Prostate gland (tissue), 2 donors: ENCODE measurements at regions of chr5 and their contacts with region 1.

Region 1: DNA sequence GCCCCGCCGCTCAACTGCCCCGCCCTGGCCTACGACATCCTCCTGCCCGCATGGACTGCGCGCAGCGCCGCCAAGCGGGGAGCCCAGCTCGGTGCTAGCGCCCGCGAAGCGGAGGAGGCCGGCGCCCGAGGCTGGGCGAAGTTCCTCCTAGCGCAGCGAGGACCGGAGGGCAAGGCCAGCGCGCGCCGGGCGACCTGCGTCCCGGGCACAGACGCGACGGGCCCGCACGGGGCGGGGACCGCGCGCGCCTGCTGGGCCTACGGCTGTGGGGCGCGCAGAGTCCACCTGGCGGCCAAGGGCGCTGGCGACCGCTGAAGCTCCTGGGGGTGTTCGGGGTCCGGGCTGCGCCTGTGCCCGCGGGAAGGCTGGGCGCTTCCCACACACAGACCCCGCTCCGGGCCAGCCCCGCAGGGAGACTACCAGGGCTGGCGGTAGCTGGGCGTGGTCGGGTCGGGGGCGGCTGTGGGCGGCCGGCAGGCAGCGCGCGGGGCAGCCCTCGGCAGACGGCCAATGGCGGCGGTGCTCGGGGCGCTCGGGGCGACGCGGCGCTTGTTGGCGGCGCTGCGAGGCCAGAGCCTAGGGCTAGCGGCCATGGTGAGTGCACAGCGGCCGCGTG is at the start of gene PCBD2:
- DNase-seq: peak; percentile 86
- H3K4me3 ChIP-seq: peak within 1 kb of the TSS; percentile 85 to 87
- H3K27ac ChIP-seq: peak within 1 kb of the TSS; percentile 93 to 95
- H3K4me1 ChIP-seq: no peaks in the 10 kb centered on the region
- H3K27me3 ChIP-seq: no peaks in the 10 kb centered on the region
- CTCF ChIP-seq: peak; percentile 67 to 97 (median 84)
- POLR2A ChIP-seq: peak; percentile 39
- total RNA-seq, gene PCBD2: 7.4 to 9.4 TPM

Region 2: GRCh38 chr5:134738133-134738962 is 166.4 kb before region 1 on chr5 and contains the start of gene CAMLG:
- intact Hi-C with region 1: loop called (anchors 2 kb)
- DNase-seq: peak; percentile 98
- H3K4me3 ChIP-seq: peak within 1 kb of the TSS; percentile 83 to 88
- H3K27ac ChIP-seq: peak within 1 kb of the TSS; percentile 91 to 95
- H3K4me1 ChIP-seq: peaks cover 8% of the 10 kb centered on the region
- H3K27me3 ChIP-seq: no peaks in the 10 kb centered on the region
- CTCF ChIP-seq: peak in 3 of 4 experiments; percentile 43 to 67 (median 60)
- POLR2A ChIP-seq: peak; percentile 96
- total RNA-seq, gene CAMLG: 26.4 to 31.3 TPM

Region 3: GRCh38 chr5:134784241-134784920 is 120.4 kb before region 1 on chr5:
- intact Hi-C with region 1: loop called (anchors 10 kb)
- DNase-seq: no peak
- H3K4me3 ChIP-seq: no peak overlapping the region
- H3K27ac ChIP-seq: no peak overlapping the region
- H3K4me1 ChIP-seq: no peaks in the 10 kb centered on the region
- H3K27me3 ChIP-seq: no peaks in the 10 kb centered on the region
- CTCF ChIP-seq: peak in 2 of 4 experiments; percentile 23 to 32
- POLR2A ChIP-seq: no peak

Region 4: GRCh38 chr5:134845852-134846640 is 58.7 kb before region 1 on chr5 and contains the start of gene C5orf24:
- intact Hi-C with region 1: loop called (anchors 5 kb)
- DNase-seq: peak; percentile 91
- H3K4me3 ChIP-seq: peak within 1 kb of the TSS; percentile 95 to 99
- H3K27ac ChIP-seq: peak within 1 kb of the TSS; percentile 96 to 97
- H3K4me1 ChIP-seq: peaks cover 6% of the 10 kb centered on the region
- H3K27me3 ChIP-seq: no peaks in the 10 kb centered on the region
- CTCF ChIP-seq: peak in 1 of 4 experiments; percentile 25
- POLR2A ChIP-seq: peak; percentile 94
- total RNA-seq, gene C5orf24: 30.4 to 39.5 TPM

Region 5: GRCh38 chr5:134873987-134874830 is 30.5 kb before region 1 on chr5 and contains the start of gene TXNDC15:
- intact Hi-C with region 1: loop called (anchors 2 kb)
- DNase-seq: peak; percentile 80
- H3K4me3 ChIP-seq: peak within 1 kb of the TSS; percentile 84 to 86
- H3K27ac ChIP-seq: peak within 1 kb of the TSS; percentile 90 to 93
- H3K4me1 ChIP-seq: peaks cover 6% of the 10 kb centered on the region
- H3K27me3 ChIP-seq: no peaks in the 10 kb centered on the region
- CTCF ChIP-seq: no peak
- POLR2A ChIP-seq: peak; percentile 55
- total RNA-seq, gene TXNDC15: 76.1 to 132 TPM

Region 6: DNA sequence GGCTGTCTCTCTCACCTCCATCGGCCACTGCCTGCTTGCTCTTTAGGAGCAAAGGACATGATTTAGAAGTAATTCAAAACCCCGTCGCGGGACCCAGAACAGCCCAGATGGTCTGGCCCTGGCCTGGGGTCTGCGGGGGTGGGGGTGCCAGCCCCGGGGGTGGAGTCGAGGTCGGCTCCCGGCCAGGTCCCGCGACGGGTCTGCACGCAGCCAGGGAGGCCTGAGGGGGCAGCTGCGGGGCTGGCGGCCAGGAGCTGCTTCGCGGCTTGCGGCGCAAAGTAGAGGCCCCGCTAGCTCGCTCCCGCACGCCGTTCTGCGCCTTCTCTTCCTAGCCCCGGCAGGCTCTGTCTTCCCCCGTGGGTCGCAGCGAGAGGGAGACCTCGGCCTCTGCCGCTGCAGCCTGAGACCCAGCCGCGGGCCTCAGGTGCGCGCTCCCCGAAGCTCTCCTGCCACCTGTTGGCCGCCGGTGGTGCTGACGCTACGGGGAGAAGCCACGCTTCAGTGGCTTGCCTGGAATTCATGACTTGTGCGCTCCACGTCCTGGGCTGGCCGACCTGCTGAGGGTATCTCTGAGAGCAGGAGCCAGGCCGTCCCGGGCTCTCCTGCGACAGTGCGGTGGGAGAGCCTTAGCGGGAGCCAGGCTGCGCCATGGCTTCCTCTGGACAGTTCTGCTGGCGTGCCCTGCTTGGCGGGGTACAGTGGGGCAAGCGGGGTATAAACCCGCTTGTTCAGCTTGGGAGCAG is 286.5 kb after region 1 on chr5:
- intact Hi-C with region 1: loop called (anchors 5 kb)
- DNase-seq: peak; percentile 73
- H3K4me3 ChIP-seq: peak overlapping the region; percentile 26 to 28
- H3K27ac ChIP-seq: peak overlapping the region; percentile 28 to 69
- H3K4me1 ChIP-seq: no peaks in the 10 kb centered on the region
- H3K27me3 ChIP-seq: no peaks in the 10 kb centered on the region
- CTCF ChIP-seq: peak; percentile 74 to 96 (median 88)
- POLR2A ChIP-seq: no peak